Activated CD4-positive, alpha-beta T cell treated with anti-CD3 and anti-CD28 coated beads for 36 hours (primary cell): ENCODE measurements at regions of chr11 and their contacts with region 1.

Region 1: DNA sequence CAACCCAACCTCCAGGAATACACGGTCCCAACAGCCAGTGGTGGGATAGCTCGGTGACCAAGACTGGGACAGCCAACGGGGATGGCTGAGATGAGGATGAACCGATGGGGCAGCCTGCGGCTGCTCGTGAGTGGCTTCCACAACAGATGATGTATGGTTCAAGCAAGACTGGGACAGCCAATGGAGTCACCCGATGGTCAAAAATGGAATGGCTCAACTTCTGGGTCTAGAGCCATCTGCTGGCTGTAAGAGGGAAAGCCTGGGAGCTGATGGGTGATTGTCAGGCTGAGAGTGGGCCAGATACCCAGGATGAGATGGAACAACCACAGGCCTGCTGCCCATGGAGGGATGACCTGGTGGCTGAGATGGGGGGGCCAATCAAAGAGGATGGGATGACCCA is 35.5 kb downstream of the SYT7 start:
- DNase-seq: no peak
- ATAC-seq: no peak
- H3K4me3 Mint-ChIP-seq: no peak overlapping the region
- H3K27ac Mint-ChIP-seq: no peak overlapping the region
- H3K4me1 Mint-ChIP-seq: no peaks in the 10 kb centered on the region
- H3K27me3 Mint-ChIP-seq: peaks cover 11% of the 10 kb centered on the region

Region 2: DNA sequence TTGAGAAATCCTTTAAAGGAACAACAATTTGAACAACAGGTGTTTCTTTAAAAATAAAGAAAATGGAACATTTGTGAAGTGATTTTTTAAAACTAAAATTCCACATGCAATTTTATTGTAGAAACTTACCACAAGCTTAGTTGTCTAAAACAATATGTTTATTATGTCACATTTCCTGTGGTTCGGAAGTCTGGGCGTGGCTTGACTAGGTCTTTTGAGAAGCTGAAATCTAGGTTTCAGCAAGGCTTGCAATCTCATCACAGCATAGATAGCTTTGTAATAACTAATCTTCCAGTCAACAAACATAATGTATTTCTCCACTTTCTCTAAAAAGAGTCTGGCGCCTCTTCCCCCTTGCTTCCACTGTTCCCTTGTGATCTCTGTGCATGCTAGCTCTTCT is 1389.4 kb before region 1 on chr11:
- CTCF ChIA-PET with region 1: no interaction called
- POLR2A ChIA-PET with region 1: no interaction called
- intact Hi-C with region 1: no loop called
- DNase-seq: no peak
- ATAC-seq: no peak
- H3K4me3 Mint-ChIP-seq: no peak overlapping the region
- H3K27ac Mint-ChIP-seq: no peak overlapping the region
- H3K4me1 Mint-ChIP-seq: peaks cover 5% of the 10 kb centered on the region
- H3K27me3 Mint-ChIP-seq: peaks cover 5% of the 10 kb centered on the region

Region 3: GRCh38 chr11:61567286-61568061 is 22.1 kb after region 1 on chr11:
- CTCF ChIA-PET with region 1: interaction called, 12 read pairs
- POLR2A ChIA-PET with region 1: no interaction called
- intact Hi-C with region 1: no loop called
- DNase-seq: peak; percentile 86
- ATAC-seq: peak; percentile 91
- H3K4me3 Mint-ChIP-seq: no peak overlapping the region
- H3K27ac Mint-ChIP-seq: no peak overlapping the region
- H3K4me1 Mint-ChIP-seq: no peaks in the 10 kb centered on the region
- H3K27me3 Mint-ChIP-seq: peaks cover 37% of the 10 kb centered on the region

Region 4: GRCh38 chr11:61609980-61610366 is 64.6 kb after region 1 on chr11:
- CTCF ChIA-PET with region 1: no interaction called
- POLR2A ChIA-PET with region 1: no interaction called
- intact Hi-C with region 1: no loop called
- DNase-seq: no peak
- ATAC-seq: no peak
- H3K4me3 Mint-ChIP-seq: no peak overlapping the region
- H3K27ac Mint-ChIP-seq: no peak overlapping the region
- H3K4me1 Mint-ChIP-seq: no peaks in the 10 kb centered on the region
- H3K27me3 Mint-ChIP-seq: peaks cover 15% of the 10 kb centered on the region

Region 5: DNA sequence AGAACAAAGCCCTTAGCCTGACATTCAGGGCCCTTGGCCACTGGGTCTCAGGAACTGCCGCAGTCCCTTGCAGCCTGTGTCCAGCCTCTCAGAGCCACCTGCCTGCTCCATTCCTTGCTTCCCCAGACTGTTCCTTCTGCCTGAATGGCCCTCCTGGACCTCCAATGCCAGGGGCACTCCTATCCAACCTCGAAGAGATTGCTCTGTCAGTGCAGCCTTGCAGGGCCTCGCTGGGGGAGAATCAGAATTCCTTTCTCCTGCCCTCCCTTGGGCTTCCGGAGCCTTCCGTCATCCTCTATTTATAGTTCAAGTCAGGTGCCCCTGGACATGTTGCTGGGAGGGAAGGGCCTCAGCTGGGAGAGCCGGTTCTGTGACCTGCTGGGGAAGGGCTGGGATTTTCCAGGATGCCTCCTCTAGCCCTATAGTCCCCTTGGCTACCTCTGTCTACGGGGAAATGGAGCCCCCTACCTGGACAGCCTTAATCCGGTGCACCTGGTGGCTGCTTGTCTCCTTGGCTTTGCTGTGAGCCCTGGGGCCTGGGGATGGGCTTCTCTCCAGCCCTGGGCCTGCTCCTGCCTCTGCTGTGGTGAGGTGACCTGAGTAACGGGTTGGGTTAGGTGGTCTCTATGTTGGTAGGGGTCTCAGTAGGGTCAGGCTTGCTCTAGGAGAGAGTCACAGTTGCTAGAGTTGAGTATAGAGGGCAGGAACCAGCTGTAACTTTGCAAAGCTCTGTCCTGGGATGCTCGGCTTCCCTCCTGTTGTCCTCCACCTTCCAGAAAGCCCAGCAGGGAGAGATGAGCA is 81.4 kb after region 1 on chr11:
- CTCF ChIA-PET with region 1: no interaction called
- POLR2A ChIA-PET with region 1: no interaction called
- intact Hi-C with region 1: no loop called
- DNase-seq: no peak
- ATAC-seq: no peak
- H3K4me3 Mint-ChIP-seq: no peak overlapping the region
- H3K27ac Mint-ChIP-seq: no peak overlapping the region
- H3K4me1 Mint-ChIP-seq: no peaks in the 10 kb centered on the region
- H3K27me3 Mint-ChIP-seq: peaks cover 6% of the 10 kb centered on the region